ENCODE measurements at regions of chr20 and their contacts with region 1.

Region 1: GRCh38 chr20:3218307-3218988 is 9.2 kb downstream of the ITPA start:
- DNase-seq: peak; percentile 75
- ATAC-seq: peak; percentile 74
- H3K4me3 ChIP-seq: peak overlapping the region in 1 of 3 experiments; percentile 17; a peak in 1 of 6 replicates
- H3K27ac ChIP-seq: peak overlapping the region; percentile 27
- H3K4me1 ChIP-seq: peaks cover 56% of the 10 kb centered on the region
- H3K27me3 ChIP-seq: no peaks in the 10 kb centered on the region
- CTCF ChIP-seq: peak; percentile 100
- EP300 ChIP-seq: peak in 1 of 2 experiments; percentile 22; a peak in 1 of 4 replicates
- POLR2A ChIP-seq: peak in 1 of 2 experiments; percentile 58; a peak in 2 of 4 replicates
- RAD21 ChIP-seq: peak; percentile 100

Region 2: GRCh38 chr20:2151858-2152281 is 1066.6 kb before region 1 on chr20:
- CTCF ChIA-PET with region 1: no interaction called
- POLR2A ChIA-PET with region 1: no interaction called
- in situ Hi-C with region 1: no loop called
- intact Hi-C with region 1: no loop called
- DNase-seq: no peak
- ATAC-seq: peak; percentile 10; the same call in 1 of the 3 replicates
- H3K4me3 ChIP-seq: no peak overlapping the region
- H3K27ac ChIP-seq: no peak overlapping the region
- H3K4me1 ChIP-seq: peaks cover 4% of the 10 kb centered on the region
- H3K27me3 ChIP-seq: no peaks in the 10 kb centered on the region; a peak in 1 of 5 replicates
- CTCF ChIP-seq: no peak
- EP300 ChIP-seq: no peak
- POLR2A ChIP-seq: no peak
- RAD21 ChIP-seq: no peak

Region 3: GRCh38 chr20:3204124-3204822 is 14.2 kb before region 1 on chr20 and contains the start of gene DDRGK1:
- CTCF ChIA-PET with region 1: no interaction called
- POLR2A ChIA-PET with region 1: interaction called, 149 read pairs
- in situ Hi-C with region 1: no loop called
- intact Hi-C with region 1: no loop called
- DNase-seq: peak; percentile 85
- ATAC-seq: peak; percentile 84
- H3K4me3 ChIP-seq: peak within 1 kb of the TSS; percentile 76 to 98 (median 81)
- H3K27ac ChIP-seq: peak within 1 kb of the TSS; percentile 87
- H3K4me1 ChIP-seq: peaks cover 34% of the 10 kb centered on the region
- H3K27me3 ChIP-seq: peaks cover 0 to 6% of the 10 kb centered on the region in 2 experiments; a peak in 1 of 5 replicates
- CTCF ChIP-seq: peak; percentile 17; the same call in 1 of the 2 replicates
- EP300 ChIP-seq: no peak
- POLR2A ChIP-seq: peak; percentile 96
- RAD21 ChIP-seq: peak; percentile 73
- total RNA-seq, gene DDRGK1: 75.4 and 149 TPM in 2 replicates

Region 4: DNA sequence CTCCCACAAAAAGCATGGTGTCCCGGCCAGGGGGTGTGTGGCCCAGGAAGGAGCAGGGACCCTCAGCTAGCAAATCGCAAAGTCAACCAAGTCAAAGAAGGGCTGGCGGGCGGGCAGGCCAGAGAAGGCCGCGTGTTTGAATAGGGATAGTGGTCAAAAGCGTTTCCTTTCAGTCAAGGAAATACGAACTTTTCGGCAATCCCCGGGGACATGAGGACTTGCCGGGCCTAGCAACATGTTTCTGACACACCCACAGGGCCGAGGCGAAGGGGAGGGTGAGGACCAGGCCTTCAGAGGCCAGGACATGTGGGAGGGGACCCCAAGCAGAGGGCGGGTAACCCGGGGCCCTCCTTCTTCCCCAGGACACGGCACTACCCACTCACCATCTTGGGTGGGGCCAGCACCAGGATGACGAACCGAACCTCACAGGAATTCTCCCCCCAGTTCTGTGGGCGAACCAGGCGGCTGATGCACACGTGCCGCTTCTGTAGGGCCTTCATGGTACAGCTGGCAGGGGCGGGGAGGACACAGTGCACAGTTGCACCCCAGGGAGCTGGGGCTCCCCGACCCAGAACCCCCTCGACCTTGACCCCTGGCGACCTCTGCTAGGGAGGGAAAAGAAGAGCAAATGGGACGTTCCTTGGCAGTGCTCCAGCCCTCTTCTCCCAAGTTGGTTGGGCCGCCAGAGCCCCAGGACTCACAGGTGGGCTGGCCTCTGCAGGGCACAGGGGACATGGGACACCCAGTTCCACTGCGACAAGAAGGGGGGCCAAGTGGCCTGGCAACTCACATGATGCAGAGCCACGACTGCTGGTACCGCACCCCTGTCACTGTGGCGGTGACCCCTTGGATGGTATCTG is 14.9 kb after region 1 on chr20:
- CTCF ChIA-PET with region 1: interaction called, 5 read pairs
- POLR2A ChIA-PET with region 1: interaction called, 29 read pairs
- in situ Hi-C with region 1: no loop called
- intact Hi-C with region 1: loop called (anchors 1 kb)
- DNase-seq: no peak
- ATAC-seq: no peak
- H3K4me3 ChIP-seq: no peak overlapping the region
- H3K27ac ChIP-seq: no peak overlapping the region
- H3K4me1 ChIP-seq: peaks cover 52% of the 10 kb centered on the region
- H3K27me3 ChIP-seq: peaks cover 0 to 13% of the 10 kb centered on the region in 2 experiments; a peak in 2 of 5 replicates
- CTCF ChIP-seq: no peak
- EP300 ChIP-seq: no peak
- POLR2A ChIP-seq: no peak
- RAD21 ChIP-seq: no peak

Region 5: DNA sequence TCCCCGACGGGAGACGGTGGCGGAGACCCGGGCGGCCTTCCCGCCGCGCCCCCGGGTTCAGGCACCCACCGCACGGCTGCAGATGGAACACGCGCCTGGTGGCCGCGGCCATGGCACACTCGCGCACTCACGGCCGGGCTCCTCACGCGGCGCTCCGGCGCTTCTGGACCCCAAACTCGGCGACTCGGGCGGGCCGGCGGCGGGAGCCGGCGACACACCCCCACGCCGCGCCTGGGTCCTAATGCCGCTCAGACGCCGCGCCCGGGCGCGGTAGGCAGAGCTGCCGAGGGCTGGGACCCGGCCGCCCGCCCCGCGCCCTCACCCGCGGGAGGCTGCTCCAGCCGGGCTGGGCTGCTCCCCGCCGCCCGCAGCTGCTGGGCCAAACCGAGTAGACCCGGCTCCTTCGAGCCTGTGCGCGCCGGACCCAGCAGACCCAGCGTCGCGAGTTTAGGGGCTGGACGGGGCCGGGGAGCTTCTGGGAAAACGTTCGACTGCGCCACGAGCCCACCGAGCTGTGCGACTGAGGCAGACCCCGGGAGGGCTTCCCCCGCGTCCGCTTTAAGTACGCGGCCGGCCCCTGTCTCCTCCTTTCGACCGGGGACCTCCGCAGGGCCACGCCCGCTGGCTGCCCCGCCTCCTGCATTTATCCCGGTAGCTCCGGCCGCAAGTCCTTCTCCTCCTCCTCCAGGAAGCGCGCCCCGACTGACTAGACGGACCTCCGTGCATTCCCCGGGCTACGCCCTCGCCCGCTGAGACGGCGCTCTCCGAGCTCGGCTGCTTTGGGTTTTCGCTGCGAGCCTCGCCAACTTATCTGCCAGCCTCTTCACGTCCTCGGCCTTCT is 20.8 kb after region 1 on chr20 and contains the start of gene SLC4A11:
- CTCF ChIA-PET with region 1: interaction called, 5 read pairs
- POLR2A ChIA-PET with region 1: interaction called, 26 read pairs
- in situ Hi-C with region 1: no loop called
- intact Hi-C with region 1: no loop called
- DNase-seq: peak; percentile 56
- ATAC-seq: peak; percentile 59
- H3K4me3 ChIP-seq: peak within 1 kb of the TSS; percentile 59 to 83 (median 83)
- H3K27ac ChIP-seq: no peak within 1 kb of the TSS
- H3K4me1 ChIP-seq: peaks cover 66% of the 10 kb centered on the region
- H3K27me3 ChIP-seq: peaks cover 6 to 40% of the 10 kb centered on the region in 2 experiments
- CTCF ChIP-seq: no peak
- EP300 ChIP-seq: no peak
- POLR2A ChIP-seq: no peak
- RAD21 ChIP-seq: peak; percentile 39; the same call in 1 of the 2 replicates
- total RNA-seq, gene SLC4A11: 1.1 and 3.9 TPM in 2 replicates

Region 6: DNA sequence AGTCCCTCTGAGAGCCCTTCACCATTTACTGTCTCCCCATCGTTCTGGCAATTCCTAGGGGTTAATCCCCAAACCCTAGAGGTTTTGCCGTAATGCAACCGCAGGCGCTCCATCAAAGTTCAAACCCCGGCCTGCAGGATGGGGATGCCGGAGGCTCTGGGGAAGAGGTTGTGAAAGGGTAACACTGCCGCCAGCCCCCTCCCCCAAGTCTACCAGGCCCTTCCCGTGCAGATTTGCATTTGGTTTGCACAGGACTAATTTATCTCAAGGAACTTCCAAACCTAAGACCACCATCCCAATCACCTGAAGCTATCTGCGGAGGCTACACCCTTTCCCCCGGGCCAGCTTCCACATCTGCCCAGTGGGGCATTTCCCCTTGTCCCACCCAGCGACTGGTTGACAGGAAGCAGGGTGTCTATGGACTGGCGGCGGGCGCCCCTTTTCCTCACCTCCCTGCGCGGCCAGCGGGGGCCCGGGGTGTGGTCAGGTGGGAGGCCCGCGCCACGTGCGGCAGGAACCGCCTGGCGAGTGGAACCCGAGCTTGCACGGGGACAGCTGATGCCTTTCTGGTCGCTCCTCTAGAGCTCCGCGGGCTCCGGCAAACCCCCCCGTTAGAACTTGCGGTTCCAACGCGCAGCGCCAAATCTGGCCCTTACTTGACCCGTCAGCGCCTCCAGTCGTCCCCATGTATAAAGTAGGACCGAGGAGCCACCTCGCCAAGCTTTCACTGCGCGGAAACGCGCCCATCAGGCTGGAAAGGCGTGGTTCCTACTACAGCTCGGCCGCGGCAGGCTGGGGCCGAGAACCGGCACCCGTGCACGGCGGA is 29.9 kb after region 1 on chr20:
- CTCF ChIA-PET with region 1: interaction called, 86 read pairs
- POLR2A ChIA-PET with region 1: interaction called, 110 read pairs
- in situ Hi-C with region 1: loop called (anchors 5 kb)
- intact Hi-C with region 1: loop called (anchors 1 kb)
- DNase-seq: no peak
- ATAC-seq: peak; percentile 53
- H3K4me3 ChIP-seq: peak overlapping the region; percentile 20 to 61 (median 35); a peak in 5 of 6 replicates
- H3K27ac ChIP-seq: no peak overlapping the region
- H3K4me1 ChIP-seq: peaks cover 48% of the 10 kb centered on the region
- H3K27me3 ChIP-seq: peaks cover 1 to 11% of the 10 kb centered on the region in 2 experiments; a peak in 2 of 5 replicates
- CTCF ChIP-seq: peak; percentile 69
- EP300 ChIP-seq: no peak
- POLR2A ChIP-seq: no peak
- RAD21 ChIP-seq: no peak; the same call in 1 of the 2 replicates

Region 7: GRCh38 chr20:3276680-3277015 is 58.2 kb after region 1 on chr20:
- CTCF ChIA-PET with region 1: interaction called, 19 read pairs
- POLR2A ChIA-PET with region 1: interaction called, 4 read pairs
- in situ Hi-C with region 1: no loop called
- intact Hi-C with region 1: loop called (anchors 1 kb)
- DNase-seq: peak; percentile 68
- ATAC-seq: peak; percentile 87
- H3K4me3 ChIP-seq: no peak overlapping the region
- H3K27ac ChIP-seq: no peak overlapping the region
- H3K4me1 ChIP-seq: no peaks in the 10 kb centered on the region
- H3K27me3 ChIP-seq: no peaks in the 10 kb centered on the region
- CTCF ChIP-seq: peak; percentile 87
- EP300 ChIP-seq: no peak
- POLR2A ChIP-seq: no peak
- RAD21 ChIP-seq: peak; percentile 67

Region 8: DNA sequence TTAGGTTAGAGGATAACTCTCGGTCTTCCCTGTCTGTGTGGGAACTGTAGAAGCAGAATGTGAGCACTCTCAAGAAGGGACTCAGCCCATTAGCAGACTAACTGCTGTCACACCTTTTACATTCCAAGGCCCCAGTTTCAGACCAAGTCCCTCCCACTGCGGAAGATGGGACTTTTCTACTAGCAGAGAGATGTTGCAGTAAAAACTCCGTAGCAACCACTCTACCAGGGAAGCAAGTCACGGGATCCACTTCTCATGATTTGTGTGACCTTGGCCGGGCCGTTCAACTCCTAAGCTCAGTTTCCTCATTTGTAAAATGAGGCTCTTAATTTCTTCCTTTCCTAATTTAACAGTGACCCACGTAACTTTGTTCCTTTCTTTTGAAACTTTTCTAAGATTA is 97.7 kb after region 1 on chr20:
- CTCF ChIA-PET with region 1: interaction called, 4 read pairs
- POLR2A ChIA-PET with region 1: no interaction called
- in situ Hi-C with region 1: no loop called
- intact Hi-C with region 1: loop called (anchors 1 kb)
- DNase-seq: no peak
- ATAC-seq: no peak
- H3K4me3 ChIP-seq: no peak overlapping the region
- H3K27ac ChIP-seq: no peak overlapping the region
- H3K4me1 ChIP-seq: peaks cover 13% of the 10 kb centered on the region
- H3K27me3 ChIP-seq: no peaks in the 10 kb centered on the region
- CTCF ChIP-seq: no peak
- EP300 ChIP-seq: no peak
- POLR2A ChIP-seq: no peak
- RAD21 ChIP-seq: no peak